WTC11 (cell line): ENCODE measurements at regions of chr19 and their contacts with region 1.

Region 1: DNA sequence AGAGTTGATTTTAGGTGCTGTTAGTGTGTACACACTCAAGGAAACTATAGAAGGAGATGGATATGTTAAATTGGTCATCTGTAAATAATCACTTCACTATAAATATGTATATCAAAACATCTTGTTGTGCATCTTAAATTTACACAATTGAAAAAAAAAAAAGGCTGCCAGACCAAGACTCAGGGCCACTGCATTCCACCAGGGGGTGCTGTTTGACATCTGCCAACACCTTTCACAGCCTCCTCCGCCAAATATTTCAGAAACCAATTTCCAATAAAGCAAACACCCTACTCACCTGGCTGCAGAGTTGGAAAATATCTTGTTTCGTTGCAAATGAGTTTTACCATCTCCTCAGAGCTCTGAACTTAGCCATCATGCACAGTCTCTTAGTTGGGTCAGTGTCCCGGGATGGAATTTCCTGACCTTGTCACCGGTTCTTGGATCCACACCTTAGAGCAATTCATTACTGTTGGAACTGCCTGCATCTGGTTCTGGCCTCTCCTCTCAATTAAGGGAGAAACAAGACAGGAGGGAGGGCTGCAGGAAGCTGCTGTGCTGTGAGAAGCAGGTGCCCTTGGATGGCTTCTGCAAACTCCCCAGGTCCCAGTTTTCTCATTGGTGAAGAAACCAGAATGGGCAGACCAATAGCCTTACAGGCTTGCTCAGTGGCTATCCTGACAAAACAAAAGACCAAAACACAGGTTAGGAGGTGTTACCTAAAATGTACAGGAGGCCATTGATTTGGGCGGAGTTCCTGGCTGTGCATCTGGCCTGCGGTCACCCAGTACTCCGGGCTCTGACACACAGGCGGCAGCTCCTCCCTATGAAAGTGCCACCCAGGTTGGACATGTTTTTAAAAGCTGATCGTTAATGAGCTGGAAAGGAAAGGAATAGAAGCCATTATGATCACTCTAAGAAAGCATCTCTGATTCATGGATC is 746.6 kb downstream of the UQCRFS1 start:
- DNase-seq: peak; percentile 79
- ATAC-seq: peak; percentile 28
- H3K4me3 Mint-ChIP-seq: no peak overlapping the region
- H3K27ac Mint-ChIP-seq: no peak overlapping the region
- H3K4me1 Mint-ChIP-seq: peaks cover 32% of the 10 kb centered on the region
- H3K27me3 Mint-ChIP-seq: no peaks in the 10 kb centered on the region
- CTCF ChIP-seq: peak; percentile 83

Region 2: GRCh38 chr19:28435551-28436271 is 30.7 kb before region 1 on chr19:
- CTCF ChIA-PET with region 1: no interaction called
- POLR2A ChIA-PET with region 1: no interaction called
- DNase-seq: no peak
- ATAC-seq: no peak
- H3K4me3 Mint-ChIP-seq: no peak overlapping the region
- H3K27ac Mint-ChIP-seq: no peak overlapping the region
- H3K4me1 Mint-ChIP-seq: peaks cover 17% of the 10 kb centered on the region
- H3K27me3 Mint-ChIP-seq: peaks cover 15% of the 10 kb centered on the region
- CTCF ChIP-seq: no peak

Region 3: DNA sequence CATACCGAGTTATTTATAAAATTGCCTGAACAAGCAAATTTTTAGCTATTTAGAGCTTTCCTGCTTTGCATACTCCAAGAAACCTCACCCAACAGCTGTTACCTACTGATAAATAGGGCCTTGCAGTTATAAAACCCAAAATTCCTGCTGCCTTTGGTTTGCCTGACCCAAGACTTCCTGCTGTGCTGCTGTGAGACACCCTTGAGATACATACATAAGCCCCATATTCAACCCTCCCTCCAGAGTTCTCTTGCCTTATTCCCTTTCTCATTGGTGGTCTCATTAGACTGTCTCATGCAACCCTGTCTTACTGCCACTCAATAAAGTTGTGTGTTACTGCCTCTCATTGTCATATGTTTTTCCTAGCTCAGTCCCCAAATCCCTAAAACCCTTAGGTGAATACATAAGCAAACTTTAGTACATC is 69.0 kb after region 1 on chr19:
- CTCF ChIA-PET with region 1: no interaction called
- POLR2A ChIA-PET with region 1: no interaction called
- DNase-seq: no peak
- ATAC-seq: no peak
- H3K4me3 Mint-ChIP-seq: no peak overlapping the region
- H3K27ac Mint-ChIP-seq: no peak overlapping the region
- H3K4me1 Mint-ChIP-seq: peaks cover 11% of the 10 kb centered on the region
- H3K27me3 Mint-ChIP-seq: no peaks in the 10 kb centered on the region
- CTCF ChIP-seq: no peak

Region 4: GRCh38 chr19:28612275-28612769 is 145.9 kb after region 1 on chr19:
- CTCF ChIA-PET with region 1: interaction called, 10 read pairs
- POLR2A ChIA-PET with region 1: no interaction called
- DNase-seq: peak; percentile 44
- ATAC-seq: 0 out of 2 replicates have a peak, but pooled peaks have one; percentile 26
- H3K4me3 Mint-ChIP-seq: no peak overlapping the region
- H3K27ac Mint-ChIP-seq: no peak overlapping the region
- H3K4me1 Mint-ChIP-seq: peaks cover 6% of the 10 kb centered on the region
- H3K27me3 Mint-ChIP-seq: no peaks in the 10 kb centered on the region
- CTCF ChIP-seq: no peak; the same call in 1 of the 2 replicates